IMR-90 (cell line): ENCODE measurements at regions of chr21 and their contacts with region 1.

Region 1: DNA sequence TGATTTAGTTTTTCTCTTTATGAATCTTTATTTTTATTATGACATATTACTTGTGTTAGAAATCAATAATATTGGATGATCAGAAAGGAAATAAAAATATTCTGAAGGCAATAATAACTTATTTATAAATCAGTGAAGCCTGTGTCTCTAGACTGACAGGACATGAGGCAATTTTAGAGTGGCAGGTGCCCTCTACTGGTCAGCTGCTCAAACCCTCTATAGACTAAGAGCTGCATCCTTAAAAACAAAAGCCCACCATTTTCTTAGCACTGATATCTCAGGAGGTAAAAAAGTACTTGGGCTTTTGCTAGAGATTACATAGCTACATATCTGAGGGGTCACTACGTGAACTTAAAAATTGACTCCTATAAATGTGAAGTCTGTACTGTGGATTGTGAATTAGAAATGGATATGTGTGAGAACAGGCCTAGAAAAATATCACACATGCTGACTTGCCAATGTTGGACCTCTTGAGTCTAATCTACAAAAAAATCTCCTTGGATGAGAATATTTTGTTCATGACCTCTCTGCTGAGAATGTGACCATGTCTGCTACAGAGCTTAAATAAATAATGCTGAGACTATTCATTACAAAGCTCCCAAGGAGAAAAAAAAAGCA is 597.9 kb upstream of the ADAMTS5 start:
- DNase-seq: peak; percentile 70
- ATAC-seq: peak; percentile 74
- H3K4me3 ChIP-seq: no peak overlapping the region
- H3K27ac ChIP-seq: peak overlapping the region; percentile 33; the same call in 1 of the 2 replicates
- H3K4me1 ChIP-seq: peaks cover 10% of the 10 kb centered on the region
- H3K27me3 ChIP-seq: no peaks in the 10 kb centered on the region
- CTCF ChIP-seq: peak; percentile 70
- POLR2A ChIP-seq: no peak
- RAD21 ChIP-seq: peak; percentile 79

Region 2: DNA sequence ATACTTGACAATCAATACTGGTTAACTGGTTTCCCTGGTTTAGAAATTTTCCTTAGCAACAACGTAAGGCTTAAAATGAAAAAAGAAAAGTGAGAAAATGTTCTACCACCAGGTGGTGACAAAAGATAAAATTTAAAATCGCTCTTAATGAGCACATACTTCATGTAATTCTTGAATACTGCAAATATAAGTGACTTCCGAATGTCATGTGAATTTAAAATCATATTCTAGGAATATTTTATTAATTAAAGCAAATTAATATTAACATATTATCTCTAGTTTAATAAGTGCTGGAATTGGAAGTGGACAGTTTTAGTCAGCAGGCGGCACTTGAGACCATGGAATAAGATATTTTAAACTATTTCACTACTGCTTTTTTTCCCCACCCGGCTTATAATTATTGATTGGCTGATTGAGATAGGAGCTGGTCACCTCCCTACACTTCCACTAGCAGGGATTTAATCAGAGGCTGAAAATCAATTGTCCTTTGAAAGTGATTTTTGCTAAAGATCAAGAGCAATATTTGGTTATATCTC is 714.6 kb before region 1 on chr21:
- CTCF ChIA-PET with region 1: no interaction called
- POLR2A ChIA-PET with region 1: interaction called, 4 read pairs
- dilution Hi-C with region 1: no loop called
- in situ Hi-C with region 1: no loop called
- intact Hi-C with region 1: loop called (anchors 1 kb)
- DNase-seq: peak; percentile 59
- ATAC-seq: no peak
- H3K4me3 ChIP-seq: no peak overlapping the region
- H3K27ac ChIP-seq: peak overlapping the region; percentile 33; the same call in 1 of the 2 replicates
- H3K4me1 ChIP-seq: peaks cover 8% of the 10 kb centered on the region
- H3K27me3 ChIP-seq: no peaks in the 10 kb centered on the region
- CTCF ChIP-seq: peak; percentile 58
- POLR2A ChIP-seq: no peak; the same call in 1 of the 2 replicates
- RAD21 ChIP-seq: peak; percentile 72

Region 3: DNA sequence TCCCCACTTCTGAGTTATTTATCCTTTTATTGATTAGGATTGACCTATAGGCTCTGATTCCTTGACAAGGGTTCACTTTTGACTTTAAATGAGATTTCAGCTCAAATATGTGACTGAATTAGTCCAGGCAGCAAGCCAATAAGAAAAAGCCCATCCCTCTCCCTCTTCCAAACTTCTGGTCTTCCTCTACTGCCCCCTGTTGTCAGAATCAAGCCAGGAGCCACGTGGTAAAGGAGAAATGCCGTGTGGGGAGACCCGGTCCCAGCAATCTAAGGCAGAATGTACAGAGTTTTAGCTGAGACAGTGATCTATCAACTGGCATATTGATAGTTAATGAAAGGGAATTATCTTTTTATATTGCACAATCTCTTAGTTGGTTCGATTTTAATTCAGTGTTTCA is 603.1 kb before region 1 on chr21:
- CTCF ChIA-PET with region 1: no interaction called
- POLR2A ChIA-PET with region 1: no interaction called
- dilution Hi-C with region 1: no loop called
- in situ Hi-C with region 1: no loop called
- intact Hi-C with region 1: loop called (anchors 5 kb)
- DNase-seq: no peak
- ATAC-seq: no peak
- H3K4me3 ChIP-seq: no peak overlapping the region
- H3K27ac ChIP-seq: no peak overlapping the region
- H3K4me1 ChIP-seq: no peaks in the 10 kb centered on the region; the same call in none of the 2 replicates
- H3K27me3 ChIP-seq: no peaks in the 10 kb centered on the region
- CTCF ChIP-seq: 0 out of 2 replicates have a peak, but pooled peaks have one; percentile 11
- POLR2A ChIP-seq: no peak
- RAD21 ChIP-seq: no peak

Region 4: GRCh38 chr21:27213303-27213702 is 351.5 kb before region 1 on chr21:
- CTCF ChIA-PET with region 1: interaction called, 4 read pairs
- POLR2A ChIA-PET with region 1: no interaction called
- dilution Hi-C with region 1: no loop called
- in situ Hi-C with region 1: no loop called
- intact Hi-C with region 1: loop called (anchors 10 kb)
- DNase-seq: peak; percentile 36
- ATAC-seq: no peak
- H3K4me3 ChIP-seq: no peak overlapping the region
- H3K27ac ChIP-seq: no peak overlapping the region
- H3K4me1 ChIP-seq: no peaks in the 10 kb centered on the region
- H3K27me3 ChIP-seq: no peaks in the 10 kb centered on the region
- CTCF ChIP-seq: peak; percentile 40
- POLR2A ChIP-seq: no peak
- RAD21 ChIP-seq: peak; percentile 46

Region 5: DNA sequence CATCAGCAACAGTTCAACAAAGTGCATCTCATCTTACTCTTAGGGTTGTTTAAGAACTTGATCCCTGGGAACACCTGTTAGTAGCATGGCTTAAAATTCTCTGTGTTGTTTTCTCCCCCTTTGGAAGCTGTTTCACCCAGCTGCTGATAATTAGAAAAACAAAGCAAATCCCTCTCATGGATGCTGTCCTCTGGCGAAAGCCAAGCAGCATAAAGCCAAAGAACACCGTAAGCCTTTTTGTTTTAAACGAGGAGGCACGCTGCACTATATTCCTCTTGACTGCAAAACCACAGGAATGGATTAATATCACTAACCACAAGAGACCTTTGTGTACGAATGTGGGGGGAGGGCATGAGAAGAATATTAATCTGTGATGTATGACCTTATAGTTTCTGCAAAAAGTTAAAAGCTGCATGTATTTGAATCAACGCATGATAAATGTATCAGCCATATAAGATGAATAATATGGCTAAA is 504.7 kb after region 1 on chr21:
- CTCF ChIA-PET with region 1: no interaction called
- POLR2A ChIA-PET with region 1: no interaction called
- dilution Hi-C with region 1: no loop called
- in situ Hi-C with region 1: no loop called
- intact Hi-C with region 1: loop called (anchors 10 kb)
- DNase-seq: peak; percentile 83
- ATAC-seq: peak; percentile 88
- H3K4me3 ChIP-seq: no peak overlapping the region
- H3K27ac ChIP-seq: peak overlapping the region; percentile 46; the same call in 1 of the 2 replicates
- H3K4me1 ChIP-seq: peaks cover 8% of the 10 kb centered on the region
- H3K27me3 ChIP-seq: no peaks in the 10 kb centered on the region
- CTCF ChIP-seq: no peak
- POLR2A ChIP-seq: no peak
- RAD21 ChIP-seq: no peak

Region 6: DNA sequence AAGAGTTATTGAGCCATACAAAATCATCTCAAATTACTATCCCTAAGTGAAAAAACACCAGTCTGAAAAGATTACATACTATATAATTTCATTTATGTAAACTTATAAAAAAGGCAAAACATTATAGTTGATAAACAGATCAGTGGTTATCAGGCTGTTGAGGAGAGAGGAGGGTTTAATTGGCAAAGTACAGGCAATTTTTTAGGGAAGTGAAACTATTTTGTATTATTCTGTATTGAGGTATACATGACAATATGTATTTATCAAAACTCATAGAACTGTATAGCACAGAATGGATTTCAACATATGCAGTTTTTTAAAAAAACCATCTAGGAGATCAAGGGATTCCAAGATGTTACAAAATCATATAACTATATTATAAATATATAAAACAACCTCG is 1024.2 kb after region 1 on chr21:
- CTCF ChIA-PET with region 1: no interaction called
- POLR2A ChIA-PET with region 1: interaction called, 11 read pairs
- dilution Hi-C with region 1: no loop called
- in situ Hi-C with region 1: no loop called
- intact Hi-C with region 1: no loop called
- DNase-seq: no peak
- ATAC-seq: no peak
- H3K4me3 ChIP-seq: no peak overlapping the region
- H3K27ac ChIP-seq: no peak overlapping the region
- H3K4me1 ChIP-seq: peaks cover 3% of the 10 kb centered on the region
- H3K27me3 ChIP-seq: no peaks in the 10 kb centered on the region
- CTCF ChIP-seq: no peak
- POLR2A ChIP-seq: no peak
- RAD21 ChIP-seq: no peak